Activated B cell treated with CpG ODN at 0.5 μM for 24 hours (primary cell): ENCODE measurements at regions of chr17 and their contacts with region 1.

Region 1: GRCh38 chr17:28871056-28871579 is 16.3 kb downstream of the ERAL1 start:
- DNase-seq: no peak
- ATAC-seq: peak; percentile 99
- H3K4me3 Mint-ChIP-seq: peak overlapping the region; percentile 50
- H3K27ac Mint-ChIP-seq: peak overlapping the region; percentile 95
- H3K4me1 Mint-ChIP-seq: peaks cover 30% of the 10 kb centered on the region
- H3K27me3 Mint-ChIP-seq: no peaks in the 10 kb centered on the region
- CTCF ChIP-seq: no peak

Region 2: GRCh38 chr17:28576758-28577465 is 294.2 kb before region 1 on chr17 and contains the start of gene ALDOC:
- CTCF ChIA-PET with region 1: no interaction called
- POLR2A ChIA-PET with region 1: interaction called, 13 read pairs
- intact Hi-C with region 1: no loop called
- DNase-seq: peak; percentile 98
- ATAC-seq: peak; percentile 99
- H3K4me3 Mint-ChIP-seq: peak within 1 kb of the TSS; percentile 79
- H3K27ac Mint-ChIP-seq: peak within 1 kb of the TSS; percentile 92
- H3K4me1 Mint-ChIP-seq: peaks cover 26% of the 10 kb centered on the region
- H3K27me3 Mint-ChIP-seq: no peaks in the 10 kb centered on the region
- CTCF ChIP-seq: no peak
- total RNA-seq, gene ALDOC: 73.4 and 75.0 TPM in 2 replicates

Region 3: GRCh38 chr17:28842282-28843012 is 28.7 kb before region 1 on chr17 and contains the start of gene FAM222B:
- CTCF ChIA-PET with region 1: no interaction called
- POLR2A ChIA-PET with region 1: interaction called, 14 read pairs
- intact Hi-C with region 1: no loop called
- DNase-seq: peak; percentile 84
- ATAC-seq: peak; percentile 98
- H3K4me3 Mint-ChIP-seq: peak within 1 kb of the TSS; percentile 96
- H3K27ac Mint-ChIP-seq: peak within 1 kb of the TSS; percentile 91
- H3K4me1 Mint-ChIP-seq: peaks cover 24% of the 10 kb centered on the region
- H3K27me3 Mint-ChIP-seq: no peaks in the 10 kb centered on the region
- CTCF ChIP-seq: no peak
- total RNA-seq, gene FAM222B: 15.6 and 16.0 TPM in 2 replicates

Region 4: DNA sequence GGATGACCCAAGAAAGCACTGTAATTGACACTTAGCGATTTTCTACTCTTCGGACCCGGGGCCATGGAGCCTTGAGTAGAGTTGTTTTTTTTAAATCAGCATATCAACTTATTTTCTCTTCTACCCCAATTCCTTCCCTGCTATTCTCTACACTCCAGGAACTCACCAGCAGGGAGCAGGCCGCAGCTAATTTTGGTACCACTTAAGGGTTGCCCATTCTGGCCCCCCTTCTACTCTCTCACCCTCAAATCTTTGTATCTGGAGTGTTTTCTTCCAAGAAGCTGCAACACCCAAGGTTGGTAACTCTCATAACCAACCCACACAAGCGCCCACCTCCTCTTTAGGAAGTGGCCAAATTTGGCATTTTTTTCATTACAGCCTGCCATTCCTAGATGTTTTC is 21.8 kb before region 1 on chr17:
- CTCF ChIA-PET with region 1: interaction called, 3 read pairs
- POLR2A ChIA-PET with region 1: interaction called, 20 read pairs
- intact Hi-C with region 1: loop called (anchors 1 kb)
- DNase-seq: no peak
- ATAC-seq: no peak
- H3K4me3 Mint-ChIP-seq: no peak overlapping the region
- H3K27ac Mint-ChIP-seq: no peak overlapping the region
- H3K4me1 Mint-ChIP-seq: peaks cover 3% of the 10 kb centered on the region
- H3K27me3 Mint-ChIP-seq: no peaks in the 10 kb centered on the region
- CTCF ChIP-seq: no peak

Region 5: DNA sequence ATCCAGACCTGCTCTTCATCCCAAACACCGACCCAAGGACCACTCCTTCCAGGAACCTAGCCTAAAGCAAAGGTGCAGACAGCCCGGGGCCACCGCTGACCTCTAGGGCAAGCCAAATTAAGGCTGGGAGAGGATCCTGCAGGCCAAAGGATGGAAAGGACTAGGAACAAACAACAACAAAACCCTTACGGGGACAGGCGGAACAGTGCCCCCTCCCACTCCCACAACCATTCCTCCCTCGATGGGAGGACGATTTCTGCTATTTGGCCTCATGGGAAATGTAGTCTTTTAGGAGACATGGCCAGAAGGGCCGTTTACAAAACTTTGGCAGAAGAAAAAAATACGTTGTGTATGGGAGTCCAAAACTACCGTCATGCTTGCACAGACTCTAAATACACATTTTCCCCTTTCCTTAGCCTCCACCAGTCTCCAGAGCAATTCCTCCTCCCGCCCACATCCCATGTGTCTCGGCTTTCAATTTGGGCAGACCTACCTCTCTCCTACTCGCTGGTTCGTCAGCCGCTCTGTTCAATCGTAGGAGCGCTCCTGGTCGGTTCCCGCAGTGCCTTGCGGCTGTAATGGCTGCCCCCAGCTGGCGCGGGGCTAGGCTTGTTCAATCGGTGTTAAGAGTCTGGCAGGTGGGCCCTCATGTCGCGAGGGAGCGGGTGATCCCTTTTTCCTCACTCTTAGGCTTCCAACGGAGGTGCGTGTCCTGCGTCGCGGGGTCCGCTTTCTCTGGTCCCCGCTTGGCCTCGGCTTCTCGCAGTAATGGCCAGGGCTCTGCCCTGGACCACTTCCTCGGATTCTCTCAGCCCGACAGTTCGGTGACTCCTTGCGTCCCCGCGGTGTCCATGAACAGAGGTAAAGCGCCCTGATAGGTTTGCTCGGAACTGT is 16.4 kb before region 1 on chr17 and contains the start of gene ERAL1:
- CTCF ChIA-PET with region 1: interaction called, 3 read pairs
- POLR2A ChIA-PET with region 1: interaction called, 20 read pairs
- intact Hi-C with region 1: loop called (anchors 1 kb)
- DNase-seq: peak; percentile 67
- ATAC-seq: peak; percentile 99
- H3K4me3 Mint-ChIP-seq: peak within 1 kb of the TSS; percentile 89
- H3K27ac Mint-ChIP-seq: peak within 1 kb of the TSS; percentile 80
- H3K4me1 Mint-ChIP-seq: peaks cover 25% of the 10 kb centered on the region
- H3K27me3 Mint-ChIP-seq: no peaks in the 10 kb centered on the region
- CTCF ChIP-seq: no peak
- total RNA-seq, gene ERAL1: 47.6 and 49.2 TPM in 2 replicates

Region 6: DNA sequence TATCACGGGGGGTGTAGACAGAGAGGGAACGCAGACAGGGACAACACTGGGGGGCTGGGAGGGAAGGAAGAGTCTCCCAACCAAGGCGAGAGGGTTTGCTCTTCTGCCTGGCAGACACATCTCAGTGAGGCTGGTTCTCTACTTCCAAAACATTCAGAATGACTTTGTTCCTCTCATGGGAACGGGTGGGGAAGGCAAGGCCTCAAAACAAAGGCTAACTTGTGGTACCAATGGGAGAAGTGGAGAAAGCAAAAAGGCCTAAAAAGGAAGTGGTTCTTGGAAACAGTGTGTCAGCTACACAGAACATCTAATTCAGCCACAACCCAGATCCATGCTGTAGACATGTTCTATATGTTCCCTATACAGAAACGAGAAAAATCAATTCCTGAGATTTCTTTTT is 18.9 kb after region 1 on chr17:
- CTCF ChIA-PET with region 1: interaction called, 3 read pairs
- POLR2A ChIA-PET with region 1: interaction called, 33 read pairs
- intact Hi-C with region 1: loop called (anchors 2 kb)
- DNase-seq: no peak
- ATAC-seq: no peak
- H3K4me3 Mint-ChIP-seq: peak overlapping the region; percentile 35
- H3K27ac Mint-ChIP-seq: peak overlapping the region; percentile 65
- H3K4me1 Mint-ChIP-seq: peaks cover 86% of the 10 kb centered on the region
- H3K27me3 Mint-ChIP-seq: no peaks in the 10 kb centered on the region
- CTCF ChIP-seq: no peak

Region 7: DNA sequence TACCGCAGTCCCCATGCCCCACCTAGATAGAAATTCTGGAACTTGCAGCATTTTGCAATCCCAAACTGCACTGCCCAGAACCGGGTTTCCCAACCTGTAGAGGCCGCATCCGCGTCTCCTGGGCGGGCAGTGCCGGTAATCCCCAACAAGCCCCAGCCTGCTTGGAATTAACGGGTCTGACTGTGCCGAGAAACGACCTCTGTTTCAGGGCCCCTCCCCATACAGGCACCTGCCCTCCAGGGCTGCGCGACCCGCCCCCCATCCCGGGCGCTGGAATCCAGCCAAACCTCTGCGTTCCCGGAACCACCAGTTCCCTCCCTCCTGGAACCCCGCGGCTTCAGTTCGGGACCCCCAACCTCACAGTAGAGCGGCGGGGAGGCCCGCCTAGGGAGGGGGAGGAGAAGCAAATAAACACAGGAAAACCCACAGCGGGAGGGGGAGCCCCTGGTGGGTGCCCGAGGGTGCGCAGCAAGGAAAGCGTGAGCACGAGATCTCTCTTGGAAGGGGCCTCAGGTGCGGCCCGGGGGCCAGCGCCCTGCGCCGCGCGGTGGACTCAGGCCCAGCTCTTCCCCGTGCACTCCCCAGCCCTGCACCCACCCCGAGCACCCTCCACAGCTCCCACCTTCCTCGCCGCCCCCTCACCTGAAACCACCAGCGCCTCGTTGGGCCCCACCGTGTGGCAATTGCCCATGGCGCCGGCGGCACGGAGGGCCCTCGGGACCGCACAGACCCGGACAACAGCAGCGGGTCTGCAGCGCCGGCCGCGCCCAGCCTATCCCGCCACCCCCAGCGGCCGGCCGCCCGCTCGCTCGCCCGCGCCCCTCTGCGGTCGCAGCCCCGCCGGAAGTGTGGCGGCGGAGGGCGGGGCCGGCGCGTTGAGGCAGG is 26.0 kb after region 1 on chr17 and contains the start of gene FLOT2:
- CTCF ChIA-PET with region 1: interaction called, 5 read pairs
- POLR2A ChIA-PET with region 1: interaction called, 33 read pairs
- intact Hi-C with region 1: no loop called
- DNase-seq: peak; percentile 66
- ATAC-seq: peak; percentile 58
- H3K4me3 Mint-ChIP-seq: peak within 1 kb of the TSS; percentile 96
- H3K27ac Mint-ChIP-seq: peak within 1 kb of the TSS; percentile 86
- H3K4me1 Mint-ChIP-seq: peaks cover 81% of the 10 kb centered on the region
- H3K27me3 Mint-ChIP-seq: no peaks in the 10 kb centered on the region
- CTCF ChIP-seq: no peak
- total RNA-seq, gene FLOT2: 303 and 321 TPM in 2 replicates